ENCODE measurements at regions of chr1 and their contacts with region 1.

Region 1: GRCh38 chr1:239909898-239910297 is 181.8 kb upstream of the FMN2 start:
- DNase-seq: peak in 1 of 2 donors; percentile 44
- H3K4me3 ChIP-seq: no peak overlapping the region
- H3K27ac ChIP-seq: no peak overlapping the region
- H3K4me1 ChIP-seq: peaks cover 0 to 19% (median 5%) of the 10 kb centered on the region in 4 donors
- H3K27me3 ChIP-seq: no peaks in the 10 kb centered on the region
- CTCF ChIP-seq: no peak
- EP300 ChIP-seq: no peak
- POLR2A ChIP-seq: no peak

Region 2: DNA sequence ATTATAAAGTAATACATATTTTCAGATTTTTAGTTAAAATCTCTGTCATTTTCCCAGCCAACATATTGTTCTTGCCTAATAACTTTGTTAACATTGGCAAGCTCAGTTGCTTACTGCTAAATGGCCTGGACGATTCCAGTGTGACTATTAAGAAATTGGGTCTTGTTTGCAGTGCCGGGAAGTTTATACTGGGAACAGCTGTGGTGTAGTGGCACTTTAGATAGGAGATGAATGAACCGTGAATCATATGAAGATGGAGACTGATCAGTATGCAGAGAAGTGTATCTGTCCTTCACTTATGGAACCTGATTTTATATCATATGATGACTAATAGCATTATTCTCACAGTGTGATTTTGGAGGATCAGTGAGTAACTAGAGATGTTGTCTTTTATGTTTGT is 520.2 kb before region 1 on chr1:
- intact Hi-C with region 1: loop called (anchors 10 kb)
- DNase-seq: no peak
- H3K4me3 ChIP-seq: peak overlapping the region in 1 of 4 donors; percentile 74
- H3K27ac ChIP-seq: no peak overlapping the region
- H3K4me1 ChIP-seq: peaks cover 0 to 56% (median 35%) of the 10 kb centered on the region in 4 donors
- H3K27me3 ChIP-seq: peaks cover 0 to 29% (median 14%) of the 10 kb centered on the region in 3 donors
- CTCF ChIP-seq: no peak
- EP300 ChIP-seq: no peak
- POLR2A ChIP-seq: no peak

Region 3: GRCh38 chr1:239854917-239855316 is 55.0 kb before region 1 on chr1:
- intact Hi-C with region 1: no loop called
- DNase-seq: no peak
- H3K4me3 ChIP-seq: no peak overlapping the region
- H3K27ac ChIP-seq: no peak overlapping the region
- H3K4me1 ChIP-seq: peaks cover 0 to 7% (median 0%) of the 10 kb centered on the region in 4 donors
- H3K27me3 ChIP-seq: no peaks in the 10 kb centered on the region
- CTCF ChIP-seq: no peak
- EP300 ChIP-seq: no peak
- POLR2A ChIP-seq: no peak

Region 4: DNA sequence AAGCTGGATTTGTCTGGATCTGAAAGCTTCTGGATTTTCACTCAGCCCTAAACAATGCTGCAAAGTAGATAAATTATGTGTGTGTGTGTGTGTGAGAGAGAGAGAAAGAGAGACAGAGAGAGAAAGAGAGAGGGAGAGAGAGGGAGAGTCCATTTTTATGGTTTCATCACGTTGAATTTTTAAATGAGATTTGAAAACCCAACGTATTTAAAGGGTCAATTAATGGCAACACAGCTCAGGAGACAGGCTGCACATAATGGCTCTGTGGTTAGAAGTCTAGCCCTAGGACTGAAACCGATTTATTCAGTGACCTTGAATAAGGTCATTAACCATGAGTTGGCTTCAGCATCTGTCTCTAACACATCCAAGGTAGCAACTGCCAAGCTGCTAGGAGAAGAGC is 146.5 kb after region 1 on chr1:
- intact Hi-C with region 1: no loop called
- DNase-seq: no peak
- H3K4me3 ChIP-seq: no peak overlapping the region
- H3K27ac ChIP-seq: no peak overlapping the region
- H3K4me1 ChIP-seq: no peaks in the 10 kb centered on the region
- H3K27me3 ChIP-seq: no peaks in the 10 kb centered on the region
- CTCF ChIP-seq: no peak
- EP300 ChIP-seq: no peak
- POLR2A ChIP-seq: no peak

Region 5: GRCh38 chr1:240169188-240169587 is 259.3 kb after region 1 on chr1:
- intact Hi-C with region 1: no loop called
- DNase-seq: no peak
- H3K4me3 ChIP-seq: no peak overlapping the region
- H3K27ac ChIP-seq: no peak overlapping the region
- H3K4me1 ChIP-seq: no peaks in the 10 kb centered on the region
- H3K27me3 ChIP-seq: no peaks in the 10 kb centered on the region
- CTCF ChIP-seq: no peak
- EP300 ChIP-seq: no peak
- POLR2A ChIP-seq: no peak